ENCODE measurements at regions of chr15 and their contacts with region 1.

Region 1: GRCh38 chr15:74695597-74696397 is at the start of gene EDC3:
- DNase-seq: peak; percentile 84 to 87
- H3K4me3 ChIP-seq: peak within 1 kb of the TSS; percentile 87
- H3K4me3 Mint-ChIP-seq: peak within 1 kb of the TSS; percentile 97
- H3K27ac Mint-ChIP-seq: peak within 1 kb of the TSS; percentile 99
- H3K4me1 ChIP-seq: no peaks in the 10 kb centered on the region; the same call in 1 of the 2 replicates
- H3K4me1 Mint-ChIP-seq: peaks cover 13% of the 10 kb centered on the region
- H3K27me3 ChIP-seq: no peaks in the 10 kb centered on the region
- H3K27me3 Mint-ChIP-seq: no peaks in the 10 kb centered on the region
- CTCF ChIP-seq: no peak
- total RNA-seq, gene EDC3: 50.9 and 62.0 TPM in 2 replicates

Region 2: GRCh38 chr15:74340139-74340538 is 355.7 kb before region 1 on chr15:
- CTCF ChIA-PET with region 1: no interaction called
- POLR2A ChIA-PET with region 1: no interaction called
- intact Hi-C with region 1: no loop called
- DNase-seq: peak in 1 of 2 experiments; percentile 28
- H3K4me3 ChIP-seq: no peak overlapping the region
- H3K4me3 Mint-ChIP-seq: no peak overlapping the region
- H3K27ac Mint-ChIP-seq: no peak overlapping the region
- H3K4me1 ChIP-seq: 0 out of 2 replicates have a peak, but pooled peaks cover 7% of the 10 kb centered on the region
- H3K4me1 Mint-ChIP-seq: no peaks in the 10 kb centered on the region
- H3K27me3 ChIP-seq: no peaks in the 10 kb centered on the region
- H3K27me3 Mint-ChIP-seq: peaks cover 3% of the 10 kb centered on the region
- CTCF ChIP-seq: no peak

Region 3: GRCh38 chr15:74642729-74643367 is 52.9 kb before region 1 on chr15:
- CTCF ChIA-PET with region 1: no interaction called
- POLR2A ChIA-PET with region 1: no interaction called
- intact Hi-C with region 1: loop called (anchors 2 kb)
- DNase-seq: peak in 1 of 2 experiments; percentile 75
- H3K4me3 ChIP-seq: no peak overlapping the region
- H3K4me3 Mint-ChIP-seq: peak overlapping the region; percentile 48
- H3K27ac Mint-ChIP-seq: peak overlapping the region; percentile 90
- H3K4me1 ChIP-seq: peaks cover 54% of the 10 kb centered on the region
- H3K4me1 Mint-ChIP-seq: peaks cover 57% of the 10 kb centered on the region
- H3K27me3 ChIP-seq: no peaks in the 10 kb centered on the region
- H3K27me3 Mint-ChIP-seq: no peaks in the 10 kb centered on the region
- CTCF ChIP-seq: no peak

Region 4: DNA sequence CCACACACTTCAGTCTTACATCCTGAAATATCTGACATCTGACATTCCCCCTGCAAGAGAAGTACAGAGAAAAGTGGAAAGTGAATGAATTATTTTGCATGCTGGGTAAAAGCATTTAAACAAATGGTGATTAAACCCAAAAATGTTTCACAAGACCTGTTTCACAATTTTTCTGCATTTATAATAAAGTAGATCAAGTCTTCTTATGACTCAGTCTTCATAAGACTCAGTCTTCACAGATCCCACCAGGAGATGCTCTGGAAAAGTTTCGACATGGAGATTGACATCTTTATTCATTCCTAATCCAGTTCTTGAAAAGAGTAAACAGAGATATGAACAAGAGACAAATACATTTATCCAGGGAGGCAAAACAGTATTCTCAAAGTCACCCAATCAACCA is 13.2 kb after region 1 on chr15:
- CTCF ChIA-PET with region 1: no interaction called
- POLR2A ChIA-PET with region 1: no interaction called
- intact Hi-C with region 1: no loop called
- DNase-seq: no peak
- H3K4me3 ChIP-seq: no peak overlapping the region
- H3K4me3 Mint-ChIP-seq: no peak overlapping the region
- H3K27ac Mint-ChIP-seq: no peak overlapping the region
- H3K4me1 ChIP-seq: no peaks in the 10 kb centered on the region
- H3K4me1 Mint-ChIP-seq: no peaks in the 10 kb centered on the region
- H3K27me3 ChIP-seq: no peaks in the 10 kb centered on the region
- H3K27me3 Mint-ChIP-seq: no peaks in the 10 kb centered on the region
- CTCF ChIP-seq: no peak

Region 5: GRCh38 chr15:74995241-74995778 is 299.5 kb after region 1 on chr15 and contains the start of gene SCAMP5:
- CTCF ChIA-PET with region 1: no interaction called
- POLR2A ChIA-PET with region 1: interaction called, 17 read pairs
- intact Hi-C with region 1: no loop called
- DNase-seq: peak; percentile 95 to 97
- H3K4me3 ChIP-seq: peak within 1 kb of the TSS; percentile 75
- H3K4me3 Mint-ChIP-seq: peak within 1 kb of the TSS; percentile 67
- H3K27ac Mint-ChIP-seq: no peak within 1 kb of the TSS
- H3K4me1 ChIP-seq: 0 out of 2 replicates have a peak, but pooled peaks cover 2% of the 10 kb centered on the region
- H3K4me1 Mint-ChIP-seq: peaks cover 10% of the 10 kb centered on the region
- H3K27me3 ChIP-seq: peaks cover 1% of the 10 kb centered on the region; the same call in 1 of the 2 replicates
- H3K27me3 Mint-ChIP-seq: peaks cover 9% of the 10 kb centered on the region
- CTCF ChIP-seq: no peak
- total RNA-seq, gene SCAMP5: 9.2 and 11.8 TPM in 2 replicates